Caco-2 (cell line): ENCODE measurements at regions of chr5 and their contacts with region 1.

Region 1: GRCh38 chr5:1641560-1642166 is 117.9 kb upstream of the LPCAT1 start:
- DNase-seq: peak; percentile 76 to 82
- H3K4me3 ChIP-seq: no peak overlapping the region
- H3K4me3 Mint-ChIP-seq: no peak overlapping the region
- H3K27ac Mint-ChIP-seq: no peak overlapping the region
- H3K4me1 ChIP-seq: no peaks in the 10 kb centered on the region
- H3K4me1 Mint-ChIP-seq: peaks cover 5% of the 10 kb centered on the region
- H3K27me3 ChIP-seq: peaks cover 2% of the 10 kb centered on the region; the same call in 1 of the 2 replicates
- H3K27me3 Mint-ChIP-seq: peaks cover 7% of the 10 kb centered on the region
- CTCF ChIP-seq: peak; percentile 86 to 98

Region 2: GRCh38 chr5:1380011-1380817 is 261.4 kb before region 1 on chr5:
- CTCF ChIA-PET with region 1: interaction called, 9 read pairs
- POLR2A ChIA-PET with region 1: no interaction called
- intact Hi-C with region 1: loop called (anchors 2 kb)
- DNase-seq: peak; percentile 60 to 71
- H3K4me3 ChIP-seq: 0 out of 2 replicates have a peak overlapping the region, but pooled peaks have one; percentile 7
- H3K4me3 Mint-ChIP-seq: peak overlapping the region; percentile 59
- H3K27ac Mint-ChIP-seq: no peak overlapping the region
- H3K4me1 ChIP-seq: peaks cover 6% of the 10 kb centered on the region
- H3K4me1 Mint-ChIP-seq: no peaks in the 10 kb centered on the region
- H3K27me3 ChIP-seq: peaks cover 1% of the 10 kb centered on the region; the same call in 1 of the 2 replicates
- H3K27me3 Mint-ChIP-seq: peaks cover 5% of the 10 kb centered on the region
- CTCF ChIP-seq: peak; percentile 55 to 66

Region 3: GRCh38 chr5:1917832-1918487 is 276.3 kb after region 1 on chr5:
- CTCF ChIA-PET with region 1: no interaction called
- POLR2A ChIA-PET with region 1: no interaction called
- intact Hi-C with region 1: no loop called
- DNase-seq: peak in 1 of 2 experiments; percentile 9
- H3K4me3 ChIP-seq: no peak overlapping the region
- H3K4me3 Mint-ChIP-seq: no peak overlapping the region
- H3K27ac Mint-ChIP-seq: no peak overlapping the region
- H3K4me1 ChIP-seq: no peaks in the 10 kb centered on the region
- H3K4me1 Mint-ChIP-seq: no peaks in the 10 kb centered on the region
- H3K27me3 ChIP-seq: no peaks in the 10 kb centered on the region
- H3K27me3 Mint-ChIP-seq: peaks cover 2% of the 10 kb centered on the region
- CTCF ChIP-seq: no peak